Endothelial cell of umbilical vein (primary cell): ENCODE measurements at regions of chr6 and their contacts with region 1.

Region 1: GRCh38 chr6:135054569-135055498 is at the start of gene HBS1L:
- DNase-seq: peak; percentile 97
- H3K4me3 ChIP-seq: peak within 1 kb of the TSS; percentile 60 to 99 (median 99)
- H3K27ac ChIP-seq: peak within 1 kb of the TSS; percentile 99
- H3K4me1 ChIP-seq: peaks cover 14% of the 10 kb centered on the region
- H3K27me3 ChIP-seq: no peaks in the 10 kb centered on the region
- CTCF ChIP-seq: no peak
- POLR2A ChIP-seq: peak; percentile 87
- total RNA-seq, gene HBS1L: 74.6 and 77.0 TPM in 2 replicates

Region 2: DNA sequence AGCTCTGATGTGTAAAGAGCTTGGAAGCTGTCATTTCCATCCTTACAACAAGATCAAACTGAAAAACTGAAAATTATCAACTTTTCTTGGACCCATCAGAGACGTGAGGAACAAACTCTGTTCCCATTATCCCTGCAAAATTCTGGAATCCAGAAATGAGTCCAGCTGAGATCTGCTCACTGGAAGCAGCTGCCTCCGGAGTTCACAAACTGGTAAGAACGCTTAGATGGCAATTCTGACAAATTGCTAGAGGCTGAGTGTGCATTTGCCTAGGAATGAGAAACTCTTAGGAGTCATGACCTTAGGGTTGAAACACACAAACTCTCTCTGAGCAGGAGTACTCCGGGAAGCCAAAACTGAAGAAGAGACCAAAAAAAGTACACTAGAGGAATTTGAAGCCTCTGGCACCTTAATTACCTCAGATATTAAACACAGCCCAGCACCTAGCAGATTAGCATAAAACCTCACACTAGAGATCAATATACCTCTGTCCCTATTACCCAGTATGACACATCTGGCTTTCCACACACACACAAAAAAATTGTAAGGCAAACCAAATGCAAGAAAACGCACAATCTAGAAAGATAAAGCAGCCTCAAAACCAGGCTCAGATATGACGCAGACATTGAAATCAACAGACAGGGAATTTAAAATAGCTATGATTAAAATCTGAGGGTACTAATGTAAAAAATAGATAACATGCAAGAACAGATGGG is 503.4 kb before region 1 on chr6:
- CTCF ChIA-PET with region 1: no interaction called
- POLR2A ChIA-PET with region 1: no interaction called
- dilution Hi-C with region 1: no loop called
- intact Hi-C with region 1: no loop called
- DNase-seq: peak; percentile 76
- H3K4me3 ChIP-seq: no peak overlapping the region
- H3K27ac ChIP-seq: peak overlapping the region; percentile 86
- H3K4me1 ChIP-seq: peaks cover 28% of the 10 kb centered on the region
- H3K27me3 ChIP-seq: no peaks in the 10 kb centered on the region
- CTCF ChIP-seq: no peak
- POLR2A ChIP-seq: no peak

Region 3: DNA sequence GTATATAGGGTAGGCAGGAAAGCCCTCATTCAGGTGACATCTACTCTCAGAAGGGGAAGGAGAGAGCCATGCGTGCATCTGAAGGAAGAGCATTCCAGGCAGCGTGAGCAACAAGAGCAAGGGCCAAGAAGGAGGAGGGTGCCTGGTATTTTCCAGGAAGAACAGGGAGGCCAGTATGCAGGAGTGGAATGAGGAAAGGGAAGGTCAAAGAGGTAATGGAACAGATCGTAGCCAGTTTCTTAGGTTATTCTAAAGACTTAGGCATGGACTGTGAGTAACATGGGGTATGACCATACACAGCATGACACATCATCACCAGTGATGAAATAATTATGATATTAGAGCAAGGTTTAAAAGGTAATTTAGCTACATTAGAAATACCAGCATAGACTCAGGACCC is 129.0 kb before region 1 on chr6:
- CTCF ChIA-PET with region 1: no interaction called
- POLR2A ChIA-PET with region 1: no interaction called
- dilution Hi-C with region 1: no loop called
- intact Hi-C with region 1: no loop called
- DNase-seq: peak; percentile 81
- H3K4me3 ChIP-seq: no peak overlapping the region
- H3K27ac ChIP-seq: no peak overlapping the region
- H3K4me1 ChIP-seq: no peaks in the 10 kb centered on the region
- H3K27me3 ChIP-seq: no peaks in the 10 kb centered on the region
- CTCF ChIP-seq: no peak
- POLR2A ChIP-seq: no peak

Region 4: GRCh38 chr6:135071541-135071940 is 16.7 kb after region 1 on chr6:
- CTCF ChIA-PET with region 1: no interaction called
- POLR2A ChIA-PET with region 1: no interaction called
- dilution Hi-C with region 1: no loop called
- intact Hi-C with region 1: loop called (anchors 2 kb)
- DNase-seq: no peak
- H3K4me3 ChIP-seq: no peak overlapping the region
- H3K27ac ChIP-seq: no peak overlapping the region
- H3K4me1 ChIP-seq: peaks cover 3% of the 10 kb centered on the region
- H3K27me3 ChIP-seq: peaks cover 0 to 3% of the 10 kb centered on the region in 2 experiments
- CTCF ChIP-seq: no peak
- POLR2A ChIP-seq: no peak

Region 5: GRCh38 chr6:135183532-135184440 is 129.0 kb after region 1 on chr6:
- CTCF ChIA-PET with region 1: no interaction called
- POLR2A ChIA-PET with region 1: no interaction called
- dilution Hi-C with region 1: no loop called
- intact Hi-C with region 1: loop called (anchors 2 kb)
- DNase-seq: peak; percentile 35
- H3K4me3 ChIP-seq: no peak overlapping the region
- H3K27ac ChIP-seq: no peak overlapping the region
- H3K4me1 ChIP-seq: peaks cover 27% of the 10 kb centered on the region
- H3K27me3 ChIP-seq: peaks cover 25 to 32% of the 10 kb centered on the region in 2 experiments
- CTCF ChIP-seq: peak; percentile 53
- POLR2A ChIP-seq: no peak

Region 6: GRCh38 chr6:135314543-135314942 is 259.7 kb after region 1 on chr6:
- CTCF ChIA-PET with region 1: no interaction called
- POLR2A ChIA-PET with region 1: no interaction called
- dilution Hi-C with region 1: no loop called
- intact Hi-C with region 1: no loop called
- DNase-seq: no peak
- H3K4me3 ChIP-seq: no peak overlapping the region
- H3K27ac ChIP-seq: no peak overlapping the region
- H3K4me1 ChIP-seq: no peaks in the 10 kb centered on the region
- H3K27me3 ChIP-seq: no peaks in the 10 kb centered on the region
- CTCF ChIP-seq: no peak
- POLR2A ChIP-seq: no peak